Heart right ventricle (tissue), 16 donors: ENCODE measurements at regions of chr11 and their contacts with region 1.

Region 1: GRCh38 chr11:4962816-4963215 is 7.3 kb upstream of the OR51A2 start:
- DNase-seq: no peak
- ATAC-seq: no peak
- H3K4me3 ChIP-seq: no peak overlapping the region
- H3K27ac ChIP-seq: no peak overlapping the region
- H3K4me1 ChIP-seq: no peaks in the 10 kb centered on the region
- H3K27me3 ChIP-seq: no peaks in the 10 kb centered on the region
- CTCF ChIP-seq: no peak

Region 2: DNA sequence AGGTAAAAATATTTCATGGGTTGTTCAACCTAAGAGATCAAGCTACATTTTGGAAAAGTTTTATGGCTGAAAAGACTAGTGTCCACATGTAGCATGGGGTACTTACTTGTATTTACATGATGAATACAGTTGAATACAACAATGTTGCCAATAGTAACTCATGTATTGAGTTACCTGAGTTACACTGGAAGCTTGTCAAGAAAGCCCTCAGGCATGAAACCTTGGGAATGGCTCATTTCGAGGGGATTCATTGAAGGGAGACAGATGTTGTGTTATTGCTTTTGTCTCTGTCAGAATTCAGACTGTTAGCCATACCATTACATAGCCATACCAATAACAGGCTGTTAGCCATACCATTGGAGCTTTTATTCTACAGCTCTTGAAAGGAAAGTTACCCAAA is 132.5 kb before region 1 on chr11:
- intact Hi-C with region 1: no loop called
- DNase-seq: no peak
- ATAC-seq: no peak
- H3K4me3 ChIP-seq: no peak overlapping the region
- H3K27ac ChIP-seq: no peak overlapping the region
- H3K4me1 ChIP-seq: no peaks in the 10 kb centered on the region
- H3K27me3 ChIP-seq: no peaks in the 10 kb centered on the region
- CTCF ChIP-seq: no peak

Region 3: GRCh38 chr11:4916581-4916980 is 46.2 kb before region 1 on chr11:
- intact Hi-C with region 1: loop called in 1 of 10 experiments (anchors 10 kb)
- DNase-seq: no peak
- ATAC-seq: no peak
- H3K4me3 ChIP-seq: no peak overlapping the region
- H3K27ac ChIP-seq: no peak overlapping the region
- H3K4me1 ChIP-seq: no peaks in the 10 kb centered on the region
- H3K27me3 ChIP-seq: no peaks in the 10 kb centered on the region
- CTCF ChIP-seq: no peak

Region 4: GRCh38 chr11:4926608-4927007 is 36.2 kb before region 1 on chr11:
- intact Hi-C with region 1: no loop called
- DNase-seq: no peak
- ATAC-seq: no peak
- H3K4me3 ChIP-seq: no peak overlapping the region
- H3K27ac ChIP-seq: no peak overlapping the region
- H3K4me1 ChIP-seq: no peaks in the 10 kb centered on the region
- H3K27me3 ChIP-seq: no peaks in the 10 kb centered on the region
- CTCF ChIP-seq: no peak

Region 5: DNA sequence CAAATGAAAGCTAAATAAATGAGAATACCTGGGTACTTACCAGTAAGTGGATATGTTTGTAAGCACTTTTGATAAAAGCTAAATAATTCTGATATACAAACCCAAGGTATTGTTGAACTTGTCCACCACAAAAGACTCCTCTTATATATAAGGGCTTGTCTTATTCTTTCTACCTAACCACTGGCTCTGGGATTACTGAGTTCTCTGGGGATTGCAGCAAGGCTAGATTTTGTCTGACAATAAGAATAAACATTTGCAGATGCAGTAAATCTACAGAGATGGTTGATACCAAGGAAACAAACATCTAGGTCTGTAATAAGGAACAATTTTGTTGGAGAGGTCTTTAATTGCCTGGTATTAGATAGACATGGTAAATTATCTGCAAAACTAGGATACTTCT is 15.3 kb before region 1 on chr11 and contains the start of gene OR51A4:
- intact Hi-C with region 1: loop called in 1 of 10 experiments (anchors 2 kb)
- DNase-seq: no peak
- ATAC-seq: no peak
- H3K4me3 ChIP-seq: no peak within 1 kb of the TSS
- H3K27ac ChIP-seq: no peak within 1 kb of the TSS
- H3K4me1 ChIP-seq: no peaks in the 10 kb centered on the region
- H3K27me3 ChIP-seq: no peaks in the 10 kb centered on the region
- CTCF ChIP-seq: no peak
- total RNA-seq, gene OR51A4: not detected

Region 6: DNA sequence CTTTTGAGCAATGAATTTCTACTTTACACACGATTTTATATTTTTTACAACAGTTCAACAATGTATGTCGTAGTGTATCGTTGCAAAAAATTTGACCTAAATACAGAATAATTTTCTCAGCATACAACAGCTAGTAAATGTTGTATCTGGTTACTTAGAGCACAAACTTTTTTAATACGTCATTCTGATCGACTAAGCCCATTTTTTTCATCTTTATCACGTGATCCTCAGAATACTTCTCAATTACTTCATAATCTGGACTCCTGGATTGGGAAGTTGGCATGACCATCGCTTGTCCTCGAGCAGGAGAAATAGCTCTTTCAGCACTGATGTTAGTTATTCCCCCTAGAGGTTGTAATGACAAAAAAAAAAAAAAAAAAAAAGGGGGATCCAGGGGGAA is 48.4 kb after region 1 on chr11:
- intact Hi-C with region 1: no loop called
- DNase-seq: no peak
- ATAC-seq: no peak
- H3K4me3 ChIP-seq: no peak overlapping the region
- H3K27ac ChIP-seq: no peak overlapping the region
- H3K4me1 ChIP-seq: no peaks in the 10 kb centered on the region
- H3K27me3 ChIP-seq: peaks cover 0 to 3% (median 0%) of the 10 kb centered on the region in 7 donors
- CTCF ChIP-seq: no peak